ENCODE measurements at regions of chr5 and their contacts with region 1.

Region 1: DNA sequence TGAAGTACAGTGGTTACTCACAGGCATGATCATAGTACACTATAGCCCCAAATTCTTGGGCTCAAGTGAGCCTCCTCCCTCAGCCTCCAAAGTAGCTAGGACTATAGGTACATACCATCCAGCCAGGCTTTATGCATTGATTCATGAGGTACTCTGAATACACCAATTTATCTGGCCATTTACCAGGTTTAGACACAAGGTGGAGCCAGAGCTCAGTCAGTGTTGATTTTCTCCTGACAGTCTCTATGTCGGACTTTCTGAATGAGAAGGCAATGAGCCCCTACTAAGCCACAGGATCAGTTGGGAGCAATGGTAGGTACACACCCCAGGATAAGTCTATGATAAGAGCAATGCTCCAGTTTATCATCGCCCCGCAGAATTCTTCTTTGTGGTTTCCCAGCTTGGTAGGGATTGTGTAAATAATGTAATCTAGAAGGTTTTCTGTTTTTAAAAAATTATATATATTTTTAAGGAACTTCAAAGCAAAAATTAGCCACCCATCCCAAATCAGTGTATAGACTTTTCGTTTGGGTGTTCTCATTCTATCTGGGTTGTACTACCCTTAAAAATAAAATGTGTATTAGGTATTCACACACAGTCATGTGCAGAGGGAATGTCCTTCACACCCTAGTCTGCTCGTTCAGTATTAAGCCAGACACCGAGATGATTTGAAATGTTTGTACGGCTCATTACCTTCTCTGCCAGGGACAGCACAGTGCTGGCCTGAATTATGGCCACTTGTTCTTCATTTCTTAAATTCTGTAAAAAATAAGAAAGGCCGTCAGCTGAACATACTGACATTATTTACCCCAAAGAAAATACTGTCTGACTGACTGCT is 118.4 kb upstream of the DPYSL3 start:
- DNase-seq: peak; percentile 57
- ATAC-seq: peak; percentile 62
- H3K4me3 ChIP-seq: no peak overlapping the region
- H3K4me3 Mint-ChIP-seq: no peak overlapping the region
- H3K27ac ChIP-seq: no peak overlapping the region
- H3K27ac Mint-ChIP-seq: no peak overlapping the region
- H3K4me1 ChIP-seq: no peaks in the 10 kb centered on the region
- H3K4me1 Mint-ChIP-seq: no peaks in the 10 kb centered on the region
- H3K27me3 ChIP-seq: no peaks in the 10 kb centered on the region
- H3K27me3 Mint-ChIP-seq: no peaks in the 10 kb centered on the region
- CTCF ChIP-seq: peak; percentile 84

Region 2: GRCh38 chr5:147539053-147539452 is 89.2 kb before region 1 on chr5:
- CTCF ChIA-PET with region 1: no interaction called
- POLR2A ChIA-PET with region 1: no interaction called
- intact Hi-C with region 1: no loop called
- DNase-seq: no peak
- ATAC-seq: no peak
- H3K4me3 ChIP-seq: no peak overlapping the region
- H3K4me3 Mint-ChIP-seq: no peak overlapping the region
- H3K27ac ChIP-seq: no peak overlapping the region
- H3K27ac Mint-ChIP-seq: no peak overlapping the region
- H3K4me1 ChIP-seq: no peaks in the 10 kb centered on the region
- H3K4me1 Mint-ChIP-seq: no peaks in the 10 kb centered on the region
- H3K27me3 ChIP-seq: no peaks in the 10 kb centered on the region
- H3K27me3 Mint-ChIP-seq: peaks cover 3% of the 10 kb centered on the region
- CTCF ChIP-seq: no peak

Region 3: GRCh38 chr5:147822686-147823491 is 194.6 kb after region 1 on chr5:
- CTCF ChIA-PET with region 1: interaction called, 218 read pairs
- POLR2A ChIA-PET with region 1: no interaction called
- intact Hi-C with region 1: no loop called
- DNase-seq: peak; percentile 63
- ATAC-seq: peak; percentile 58
- H3K4me3 ChIP-seq: no peak overlapping the region
- H3K4me3 Mint-ChIP-seq: no peak overlapping the region
- H3K27ac ChIP-seq: no peak overlapping the region
- H3K27ac Mint-ChIP-seq: no peak overlapping the region
- H3K4me1 ChIP-seq: no peaks in the 10 kb centered on the region
- H3K4me1 Mint-ChIP-seq: no peaks in the 10 kb centered on the region
- H3K27me3 ChIP-seq: no peaks in the 10 kb centered on the region
- H3K27me3 Mint-ChIP-seq: peaks cover 7% of the 10 kb centered on the region
- CTCF ChIP-seq: peak; percentile 94

Region 4: GRCh38 chr5:147857302-147858129 is 229.2 kb after region 1 on chr5:
- CTCF ChIA-PET with region 1: interaction called, 4 read pairs
- POLR2A ChIA-PET with region 1: no interaction called
- intact Hi-C with region 1: loop called (anchors 1 kb)
- DNase-seq: peak; percentile 27
- ATAC-seq: no peak
- H3K4me3 ChIP-seq: no peak overlapping the region
- H3K4me3 Mint-ChIP-seq: no peak overlapping the region
- H3K27ac ChIP-seq: no peak overlapping the region
- H3K27ac Mint-ChIP-seq: no peak overlapping the region
- H3K4me1 ChIP-seq: no peaks in the 10 kb centered on the region
- H3K4me1 Mint-ChIP-seq: no peaks in the 10 kb centered on the region
- H3K27me3 ChIP-seq: no peaks in the 10 kb centered on the region
- H3K27me3 Mint-ChIP-seq: peaks cover 23% of the 10 kb centered on the region
- CTCF ChIP-seq: peak; percentile 88